ENCODE measurements at regions of chr5 and their contacts with region 1.

Region 1: GRCh38 chr5:149268928-149269557 is 2.6 kb upstream of the AFAP1L1 start:
- DNase-seq: peak; percentile 22
- ATAC-seq: peak; percentile 55
- H3K4me3 Mint-ChIP-seq: no peak overlapping the region
- H3K27ac Mint-ChIP-seq: no peak overlapping the region
- H3K4me1 Mint-ChIP-seq: peaks cover 12% of the 10 kb centered on the region
- H3K27me3 Mint-ChIP-seq: peaks cover 34% of the 10 kb centered on the region

Region 2: DNA sequence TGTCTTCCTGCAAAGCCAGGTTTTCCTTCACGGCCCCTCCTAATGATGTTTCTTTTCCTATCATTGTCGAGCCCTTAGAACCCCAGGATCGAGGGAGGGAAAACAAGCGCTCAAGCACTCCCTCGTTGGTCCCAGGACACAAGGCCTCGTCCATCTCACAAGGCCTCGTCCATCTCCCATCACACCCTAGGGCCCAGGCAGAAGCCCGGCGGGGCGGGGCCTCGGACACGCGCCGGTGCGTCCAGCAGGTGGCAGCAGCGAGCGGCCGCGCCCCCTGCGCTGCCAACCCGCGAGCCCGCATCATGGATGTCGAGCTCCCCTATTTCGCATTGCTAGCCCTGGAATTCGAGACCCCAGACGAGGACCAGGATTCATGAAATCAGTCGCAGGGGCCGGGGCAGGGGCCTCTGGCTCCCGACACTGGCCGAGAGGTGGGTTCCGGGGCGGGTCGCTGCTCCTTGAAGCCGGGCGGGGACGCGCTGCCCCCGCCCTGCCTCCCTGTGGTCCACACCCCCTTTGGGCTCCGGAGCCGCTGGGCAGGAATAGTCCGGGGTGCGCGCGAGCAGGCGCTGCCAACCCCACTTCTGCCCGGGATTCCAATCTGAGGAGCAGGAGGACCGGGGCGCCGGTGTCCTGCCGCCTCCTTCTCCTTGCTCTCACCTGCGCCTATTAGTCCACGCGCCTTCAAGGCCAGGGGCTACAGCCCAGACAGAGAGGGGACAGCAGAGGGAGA is 127.7 kb before region 1 on chr5 and contains the start of gene ABLIM3:
- CTCF ChIA-PET with region 1: interaction called, 17 read pairs
- POLR2A ChIA-PET with region 1: interaction called, 6 read pairs
- DNase-seq: peak; percentile 70
- ATAC-seq: peak; percentile 97
- H3K4me3 Mint-ChIP-seq: peak within 1 kb of the TSS; percentile 45
- H3K27ac Mint-ChIP-seq: no peak within 1 kb of the TSS
- H3K4me1 Mint-ChIP-seq: no peaks in the 10 kb centered on the region
- H3K27me3 Mint-ChIP-seq: peaks cover 17% of the 10 kb centered on the region
- total RNA-seq, gene ABLIM3: not detected

Measured in activated CD8-positive, alpha-beta T cell treated with anti-CD3 and anti-CD28 coated beads, Interleukin-2, amount 10 ng/mL, durations not matched to agents 7 days and 5 days (primary cell).